PC-3 (cell line): ENCODE measurements at regions of chr11 and their contacts with region 1.

Region 1: DNA sequence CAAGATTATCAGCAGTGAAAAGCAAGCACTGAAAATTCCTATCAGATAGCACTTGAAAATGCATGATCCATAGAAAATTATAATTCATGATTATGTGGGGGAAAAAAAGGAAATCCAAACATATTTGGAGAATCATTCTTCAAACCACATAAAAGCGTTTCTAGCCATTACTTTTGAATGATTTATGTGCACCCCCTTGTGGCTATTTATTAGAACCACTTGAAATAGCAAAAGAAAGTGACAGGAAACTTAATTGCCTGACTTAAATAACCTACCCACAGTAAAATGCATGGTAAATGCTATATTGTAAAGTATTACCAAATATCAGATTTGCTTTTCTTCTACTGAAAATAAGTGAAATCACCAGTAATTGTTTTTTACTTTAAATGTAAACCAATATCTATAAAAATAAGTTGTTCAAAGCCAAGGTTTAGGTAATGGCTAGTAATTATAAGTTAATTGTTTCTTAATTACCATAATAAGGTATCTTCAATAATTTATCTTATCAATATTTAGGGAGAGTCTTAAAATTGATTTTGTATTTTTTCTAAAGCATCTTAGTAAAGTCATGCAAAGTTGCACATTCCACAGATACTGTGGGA is 168.5 kb downstream of the ARHGAP42 start:
- DNase-seq: peak; percentile 86
- ATAC-seq: peak; percentile 25; the same call in 1 of the 2 replicates
- H3K4me3 ChIP-seq: no peak overlapping the region
- H3K27ac ChIP-seq: peak overlapping the region; percentile 20
- H3K4me1 ChIP-seq: peaks cover 18% of the 10 kb centered on the region
- H3K27me3 ChIP-seq: no peaks in the 10 kb centered on the region
- CTCF ChIP-seq: peak; percentile 89

Region 2: DNA sequence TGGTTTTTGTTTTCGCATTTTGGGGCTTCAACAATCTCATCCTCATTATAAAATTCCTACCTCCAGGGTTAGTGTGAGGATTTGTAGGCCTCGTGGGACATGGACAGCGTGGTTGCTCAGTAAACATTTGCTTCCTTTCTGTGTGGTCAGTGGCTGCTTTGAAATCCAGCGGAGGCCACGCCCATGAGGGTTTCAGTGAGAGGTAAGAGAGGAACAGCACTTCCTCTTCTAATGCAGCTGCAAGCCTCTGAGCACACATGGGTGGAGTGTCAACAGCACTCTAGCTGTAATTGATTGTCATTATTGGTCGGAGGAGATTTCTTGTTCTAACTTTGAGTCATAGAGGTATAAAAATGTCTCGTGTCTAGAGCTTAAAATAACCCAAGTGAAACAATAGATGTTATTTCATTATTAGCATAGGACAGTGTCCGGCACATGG is 174.5 kb before region 1 on chr11:
- CTCF ChIA-PET with region 1: interaction called, 4 read pairs
- POLR2A ChIA-PET with region 1: interaction called, 3 read pairs
- intact Hi-C with region 1: loop called (anchors 1 kb)
- DNase-seq: peak; percentile 91
- ATAC-seq: peak; percentile 78
- H3K4me3 ChIP-seq: no peak overlapping the region
- H3K27ac ChIP-seq: peak overlapping the region; percentile 89
- H3K4me1 ChIP-seq: peaks cover 51% of the 10 kb centered on the region
- H3K27me3 ChIP-seq: no peaks in the 10 kb centered on the region
- CTCF ChIP-seq: no peak

Region 3: GRCh38 chr11:100816823-100817222 is 38.7 kb before region 1 on chr11:
- CTCF ChIA-PET with region 1: interaction called, 4 read pairs
- POLR2A ChIA-PET with region 1: no interaction called
- intact Hi-C with region 1: loop called (anchors 5 kb)
- DNase-seq: peak; percentile 83
- ATAC-seq: peak; percentile 90
- H3K4me3 ChIP-seq: no peak overlapping the region
- H3K27ac ChIP-seq: peak overlapping the region; percentile 30; the same call in 1 of the 2 replicates
- H3K4me1 ChIP-seq: peaks cover 20% of the 10 kb centered on the region
- H3K27me3 ChIP-seq: no peaks in the 10 kb centered on the region
- CTCF ChIP-seq: no peak

Region 4: GRCh38 chr11:100827934-100828661 is 27.5 kb before region 1 on chr11:
- CTCF ChIA-PET with region 1: interaction called, 3 read pairs
- POLR2A ChIA-PET with region 1: no interaction called
- intact Hi-C with region 1: loop called (anchors 1 kb)
- DNase-seq: peak; percentile 97
- ATAC-seq: peak; percentile 86
- H3K4me3 ChIP-seq: no peak overlapping the region
- H3K27ac ChIP-seq: peak overlapping the region; percentile 93
- H3K4me1 ChIP-seq: peaks cover 46% of the 10 kb centered on the region
- H3K27me3 ChIP-seq: no peaks in the 10 kb centered on the region
- CTCF ChIP-seq: peak; percentile 85

Region 5: GRCh38 chr11:100918551-100919500 is 63.3 kb after region 1 on chr11:
- CTCF ChIA-PET with region 1: no interaction called
- POLR2A ChIA-PET with region 1: no interaction called
- intact Hi-C with region 1: no loop called
- DNase-seq: peak; percentile 77
- ATAC-seq: peak; percentile 69
- H3K4me3 ChIP-seq: no peak overlapping the region
- H3K27ac ChIP-seq: 0 out of 2 replicates have a peak overlapping the region, but pooled peaks have one; percentile 5
- H3K4me1 ChIP-seq: peaks cover 39% of the 10 kb centered on the region
- H3K27me3 ChIP-seq: no peaks in the 10 kb centered on the region
- CTCF ChIP-seq: no peak

Region 6: DNA sequence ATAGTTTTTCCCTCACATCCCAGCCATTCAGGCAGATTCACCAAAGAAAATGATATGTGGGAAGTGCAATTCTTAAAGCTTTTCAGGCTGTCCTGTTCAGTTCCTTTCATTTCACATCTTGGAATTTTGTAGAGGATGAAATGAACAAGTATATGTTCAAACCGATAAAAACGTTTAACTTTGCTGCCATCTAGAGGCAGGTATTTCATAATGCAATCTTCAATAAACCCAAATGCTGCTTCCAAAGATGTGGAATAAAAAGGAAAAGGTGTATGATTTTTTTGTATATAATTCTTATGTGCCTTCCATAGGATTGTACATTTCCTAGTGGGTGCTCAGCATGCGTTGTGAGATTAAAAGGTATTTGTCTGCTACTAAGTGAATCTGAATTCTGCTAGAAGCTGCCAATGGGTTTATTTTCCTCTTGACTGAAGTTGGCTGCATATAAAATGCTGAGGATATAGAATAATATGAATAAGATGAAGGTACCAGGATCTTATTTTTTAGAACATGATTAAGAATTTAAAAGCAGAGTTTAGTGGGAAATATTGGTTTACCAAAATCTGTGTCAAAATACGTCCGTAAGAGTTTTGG is 74.7 kb after region 1 on chr11:
- CTCF ChIA-PET with region 1: no interaction called
- POLR2A ChIA-PET with region 1: no interaction called
- intact Hi-C with region 1: loop called (anchors 1 kb)
- DNase-seq: peak; percentile 89
- ATAC-seq: peak; percentile 35
- H3K4me3 ChIP-seq: peak overlapping the region; percentile 0; the same call in 1 of the 2 replicates
- H3K27ac ChIP-seq: peak overlapping the region; percentile 55; the same call in 1 of the 2 replicates
- H3K4me1 ChIP-seq: peaks cover 31% of the 10 kb centered on the region
- H3K27me3 ChIP-seq: no peaks in the 10 kb centered on the region
- CTCF ChIP-seq: peak; percentile 92